Endothelial cell of umbilical vein (primary cell): ENCODE measurements at regions of chr13 and their contacts with region 1.

Region 1: GRCh38 chr13:52128714-52129700 is at the start of gene NEK5:
- DNase-seq: peak; percentile 69
- H3K4me3 ChIP-seq: peak within 1 kb of the TSS; percentile 54 to 69 (median 68)
- H3K27ac ChIP-seq: no peak within 1 kb of the TSS
- H3K4me1 ChIP-seq: peaks cover 8% of the 10 kb centered on the region
- H3K27me3 ChIP-seq: no peaks in the 10 kb centered on the region
- CTCF ChIP-seq: peak; percentile 66 to 79
- POLR2A ChIP-seq: no peak
- total RNA-seq, gene NEK5: 0.16 and 0.18 TPM in 2 replicates

Region 2: DNA sequence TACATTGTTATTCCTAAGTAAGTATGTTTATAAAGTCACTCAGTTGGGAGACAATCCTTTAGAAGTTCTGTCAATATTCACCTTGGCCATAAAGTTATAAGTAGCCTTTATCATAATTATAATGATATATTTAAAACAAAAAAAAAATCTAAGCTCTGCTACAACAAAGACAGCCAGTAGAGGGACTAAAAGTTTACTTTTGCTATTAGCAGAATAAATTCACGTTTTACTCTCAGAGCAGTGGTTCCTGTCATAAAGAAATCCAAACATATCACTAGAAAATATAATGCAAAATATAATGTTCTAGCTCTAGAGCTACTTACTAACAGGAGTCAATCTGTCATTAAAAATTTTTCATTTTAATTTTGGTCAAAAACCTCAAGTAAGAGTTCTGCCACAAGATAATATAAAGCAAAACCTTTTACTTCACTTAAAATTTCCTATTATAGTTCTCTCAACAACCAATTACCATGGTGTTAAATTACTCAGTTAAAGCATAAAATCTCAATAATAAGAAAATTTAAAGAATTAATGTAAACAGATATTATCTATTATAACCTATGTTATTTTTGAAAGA is 693.9 kb before region 1 on chr13:
- CTCF ChIA-PET with region 1: interaction called, 4 read pairs
- POLR2A ChIA-PET with region 1: no interaction called
- dilution Hi-C with region 1: no loop called
- intact Hi-C with region 1: loop called (anchors 5 kb)
- DNase-seq: peak; percentile 49
- H3K4me3 ChIP-seq: no peak overlapping the region
- H3K27ac ChIP-seq: no peak overlapping the region
- H3K4me1 ChIP-seq: no peaks in the 10 kb centered on the region
- H3K27me3 ChIP-seq: no peaks in the 10 kb centered on the region
- CTCF ChIP-seq: peak; percentile 19
- POLR2A ChIP-seq: no peak

Region 3: GRCh38 chr13:51723529-51723928 is 405.5 kb before region 1 on chr13:
- CTCF ChIA-PET with region 1: no interaction called
- POLR2A ChIA-PET with region 1: no interaction called
- dilution Hi-C with region 1: no loop called
- intact Hi-C with region 1: no loop called
- DNase-seq: no peak
- H3K4me3 ChIP-seq: no peak overlapping the region
- H3K27ac ChIP-seq: no peak overlapping the region
- H3K4me1 ChIP-seq: no peaks in the 10 kb centered on the region
- H3K27me3 ChIP-seq: no peaks in the 10 kb centered on the region
- CTCF ChIP-seq: no peak
- POLR2A ChIP-seq: no peak

Region 4: DNA sequence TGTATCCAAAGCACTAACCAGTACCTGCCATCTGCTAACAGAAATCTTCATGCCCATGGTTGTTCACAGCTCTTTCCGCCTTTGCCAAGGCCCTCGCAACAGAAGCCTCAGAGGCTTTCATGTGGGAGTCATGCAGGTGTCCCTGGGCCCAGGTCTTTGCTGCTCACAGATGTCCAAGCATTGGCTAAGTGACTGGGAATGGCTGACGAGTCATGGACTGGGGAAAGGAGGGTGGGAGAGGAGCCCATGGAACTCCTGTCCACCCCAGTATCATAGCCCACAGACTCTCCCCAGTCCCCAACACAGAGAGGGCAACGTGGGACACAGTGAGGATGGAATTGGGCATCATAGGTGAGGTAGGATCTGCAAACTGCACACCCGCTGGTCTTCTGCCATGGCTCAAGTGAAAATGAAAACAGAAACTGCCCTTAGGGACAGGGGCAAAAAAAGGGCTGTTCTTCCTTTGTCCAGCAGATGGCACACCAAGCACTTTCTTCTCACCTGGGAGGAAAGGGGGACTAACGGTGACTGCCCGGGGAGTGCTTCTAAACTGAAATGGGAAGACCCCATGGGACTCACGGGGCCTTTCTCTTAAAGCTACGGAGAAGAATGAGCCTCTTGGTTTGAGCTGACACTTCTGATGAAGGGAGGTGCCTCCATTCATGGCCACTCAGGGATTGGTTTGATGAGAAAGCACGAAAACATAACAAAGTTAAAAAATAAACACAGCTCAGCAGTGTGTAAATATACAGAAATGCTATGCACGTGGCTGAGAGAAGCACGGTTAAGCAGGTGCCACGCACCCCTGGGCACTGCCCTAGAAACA is 314.0 kb before region 1 on chr13:
- CTCF ChIA-PET with region 1: interaction called, 115 read pairs
- POLR2A ChIA-PET with region 1: no interaction called
- dilution Hi-C with region 1: no loop called
- intact Hi-C with region 1: loop called (anchors 1 kb)
- DNase-seq: peak; percentile 63
- H3K4me3 ChIP-seq: peak overlapping the region in 1 of 3 experiments; percentile 23
- H3K27ac ChIP-seq: no peak overlapping the region
- H3K4me1 ChIP-seq: peaks cover 6% of the 10 kb centered on the region
- H3K27me3 ChIP-seq: peaks cover 9 to 22% of the 10 kb centered on the region in 2 experiments
- CTCF ChIP-seq: peak; percentile 74 to 82
- POLR2A ChIP-seq: no peak

Region 5: GRCh38 chr13:51935326-51936201 is 193.4 kb before region 1 on chr13:
- CTCF ChIA-PET with region 1: interaction called, 16 read pairs
- POLR2A ChIA-PET with region 1: no interaction called
- dilution Hi-C with region 1: no loop called
- intact Hi-C with region 1: loop called (anchors 1 kb)
- DNase-seq: no peak
- H3K4me3 ChIP-seq: no peak overlapping the region
- H3K27ac ChIP-seq: no peak overlapping the region
- H3K4me1 ChIP-seq: no peaks in the 10 kb centered on the region
- H3K27me3 ChIP-seq: no peaks in the 10 kb centered on the region
- CTCF ChIP-seq: peak in 1 of 2 donors; percentile 26
- POLR2A ChIP-seq: no peak

Region 6: DNA sequence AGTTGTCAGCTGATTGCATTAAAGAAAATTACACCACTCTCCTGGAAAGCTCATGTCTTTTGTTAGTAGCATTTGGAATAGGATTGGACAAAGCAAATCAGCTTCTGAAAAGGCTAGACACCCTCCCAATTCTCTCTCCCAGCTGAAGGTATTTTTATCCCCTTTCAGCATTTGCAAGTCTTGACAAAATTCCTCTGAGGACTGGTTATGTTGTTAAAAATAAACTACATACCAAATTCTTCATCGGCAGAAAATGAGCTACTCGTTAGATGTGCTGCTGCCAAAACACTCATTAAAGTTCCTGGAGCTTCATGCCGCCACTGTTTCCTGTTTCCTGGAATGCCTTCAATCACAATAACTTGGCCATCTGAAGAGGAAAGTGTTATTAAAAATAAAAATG is 67.4 kb before region 1 on chr13:
- CTCF ChIA-PET with region 1: interaction called, 10 read pairs
- POLR2A ChIA-PET with region 1: no interaction called
- dilution Hi-C with region 1: no loop called
- intact Hi-C with region 1: no loop called
- DNase-seq: peak; percentile 68
- H3K4me3 ChIP-seq: no peak overlapping the region
- H3K27ac ChIP-seq: peak overlapping the region; percentile 36
- H3K4me1 ChIP-seq: peaks cover 13% of the 10 kb centered on the region
- H3K27me3 ChIP-seq: no peaks in the 10 kb centered on the region
- CTCF ChIP-seq: no peak
- POLR2A ChIP-seq: no peak

Region 7: GRCh38 chr13:52159321-52160086 is 30.5 kb after region 1 on chr13 and contains the start of gene NEK3:
- CTCF ChIA-PET with region 1: interaction called, 12 read pairs
- POLR2A ChIA-PET with region 1: no interaction called
- dilution Hi-C with region 1: no loop called
- intact Hi-C with region 1: loop called (anchors 2 kb)
- DNase-seq: peak; percentile 71
- H3K4me3 ChIP-seq: peak within 1 kb of the TSS; percentile 81 to 92 (median 90)
- H3K27ac ChIP-seq: peak within 1 kb of the TSS; percentile 46
- H3K4me1 ChIP-seq: peaks cover 52% of the 10 kb centered on the region
- H3K27me3 ChIP-seq: no peaks in the 10 kb centered on the region
- CTCF ChIP-seq: no peak
- POLR2A ChIP-seq: no peak
- total RNA-seq, gene NEK3: 13.8 and 23.5 TPM in 2 replicates

Region 8: GRCh38 chr13:52359534-52359933 is 230.5 kb after region 1 on chr13:
- CTCF ChIA-PET with region 1: no interaction called
- POLR2A ChIA-PET with region 1: no interaction called
- dilution Hi-C with region 1: no loop called
- intact Hi-C with region 1: no loop called
- DNase-seq: no peak
- H3K4me3 ChIP-seq: no peak overlapping the region
- H3K27ac ChIP-seq: no peak overlapping the region
- H3K4me1 ChIP-seq: peaks cover 10% of the 10 kb centered on the region
- H3K27me3 ChIP-seq: no peaks in the 10 kb centered on the region
- CTCF ChIP-seq: no peak
- POLR2A ChIP-seq: no peak